GM10248 (cell line): ENCODE measurements at regions of chr9 and their contacts with region 1.

Region 1: GRCh38 chr9:36190388-36191287 is at the start of gene CLTA:
- DNase-seq: peak; percentile 99
- CTCF ChIP-seq: peak; percentile 39

Region 2: DNA sequence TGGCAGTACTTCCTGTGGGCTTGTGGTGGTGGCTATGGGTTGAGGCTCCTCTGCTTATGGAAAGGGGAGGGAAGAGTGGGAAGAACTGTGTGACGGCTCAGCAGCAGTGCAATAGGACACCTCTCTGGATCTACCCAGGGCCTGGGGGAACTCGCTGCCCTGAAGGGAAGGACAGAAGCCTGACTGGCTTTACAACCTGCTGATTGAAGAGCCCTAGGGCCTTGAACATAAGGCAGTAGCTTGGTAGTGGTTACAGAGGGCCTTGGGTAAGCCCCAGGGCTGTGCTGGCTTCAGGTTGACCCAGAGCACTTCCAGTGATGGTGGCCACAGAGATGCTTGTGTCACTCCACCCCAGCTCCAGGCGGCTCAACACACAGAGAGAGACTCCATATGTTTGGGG is 15.9 kb before region 1 on chr9:
- CTCF ChIA-PET with region 1: interaction called, 12 read pairs
- POLR2A ChIA-PET with region 1: no interaction called
- DNase-seq: no peak
- CTCF ChIP-seq: no peak

Region 3: DNA sequence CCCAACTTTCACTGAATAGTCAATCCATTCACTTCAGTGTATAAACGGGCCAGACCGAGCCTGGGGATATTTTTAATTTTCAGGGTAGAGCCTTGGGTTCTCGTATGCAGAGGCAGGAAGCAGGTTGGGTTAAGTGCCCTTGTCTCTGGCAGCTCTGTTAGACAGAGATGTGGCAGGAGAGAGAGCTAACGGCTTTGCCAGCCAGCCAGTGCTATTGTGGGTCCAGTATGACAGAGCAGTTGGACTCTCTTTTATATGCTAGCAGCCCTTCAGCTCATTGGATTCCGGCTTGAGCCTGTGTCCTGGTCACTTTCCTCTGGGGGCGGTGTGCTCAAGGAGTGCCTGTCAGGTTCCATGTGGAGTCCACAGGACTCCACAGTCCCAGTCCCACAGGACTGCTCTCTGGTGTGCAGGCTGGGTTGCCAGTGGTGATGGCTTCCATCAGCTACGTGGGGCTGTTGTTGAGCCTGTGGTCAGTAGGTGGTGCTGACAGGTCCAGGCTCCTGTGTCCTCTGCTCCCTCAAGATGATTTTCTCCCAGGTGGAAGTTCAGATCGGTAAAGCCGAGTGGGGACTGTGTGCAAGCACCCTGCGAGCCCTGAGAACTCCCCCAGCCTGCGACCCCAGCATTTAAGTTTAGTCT is 14.4 kb after region 1 on chr9:
- CTCF ChIA-PET with region 1: interaction called, 37 read pairs
- POLR2A ChIA-PET with region 1: interaction called, 8 read pairs
- DNase-seq: no peak
- CTCF ChIP-seq: peak; percentile 11

Region 4: DNA sequence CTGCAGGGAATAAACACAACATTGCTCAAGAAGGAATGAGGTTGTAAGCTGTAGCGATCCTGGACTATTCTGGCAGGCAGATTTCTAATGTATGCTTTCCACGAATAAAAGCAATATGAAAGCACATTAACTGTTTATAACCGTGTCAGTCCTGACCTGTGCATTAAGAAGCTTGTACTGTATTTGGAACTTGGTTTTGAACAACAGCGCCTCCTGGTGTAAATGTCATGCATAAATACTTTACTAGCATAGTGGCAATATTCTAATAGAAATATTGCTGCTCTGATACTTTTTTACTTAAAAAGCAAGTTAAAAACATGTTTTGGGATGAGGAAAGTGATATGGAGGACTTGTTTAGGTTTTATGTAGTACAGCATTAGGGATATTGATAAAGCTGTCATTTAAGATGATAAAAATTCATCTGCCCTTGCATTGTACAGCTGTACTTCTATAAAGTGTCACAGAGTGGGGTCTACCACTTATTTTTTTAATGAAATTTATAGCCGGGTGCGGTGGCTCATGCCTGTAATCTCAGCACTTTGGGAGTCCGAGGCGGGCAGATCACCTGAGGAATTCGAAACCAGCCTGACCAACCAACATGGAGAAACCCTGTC is 138.3 kb after region 1 on chr9:
- CTCF ChIA-PET with region 1: interaction called, 26 read pairs
- POLR2A ChIA-PET with region 1: no interaction called
- DNase-seq: peak; percentile 69
- CTCF ChIP-seq: peak; percentile 63